A673 (cell line): ENCODE measurements at regions of chr20 and their contacts with region 1.

Region 1: GRCh38 chr20:1466211-1467081 is at the start of gene NSFL1C:
- DNase-seq: peak; percentile 96
- H3K4me3 ChIP-seq: peak within 1 kb of the TSS; percentile 98
- H3K27ac ChIP-seq: peak within 1 kb of the TSS; percentile 97
- H3K4me1 ChIP-seq: peaks cover 13% of the 10 kb centered on the region
- H3K27me3 ChIP-seq: no peaks in the 10 kb centered on the region
- CTCF ChIP-seq: peak; percentile 82
- total RNA-seq, gene NSFL1C: 148 and 158 TPM in 2 replicates

Region 2: GRCh38 chr20:1118336-1119127 is 347.9 kb before region 1 on chr20 and contains the start of gene PSMF1:
- CTCF ChIA-PET with region 1: no interaction called
- POLR2A ChIA-PET with region 1: no interaction called
- intact Hi-C with region 1: loop called (anchors 10 kb)
- DNase-seq: peak; percentile 96
- H3K4me3 ChIP-seq: peak within 1 kb of the TSS; percentile 99
- H3K27ac ChIP-seq: peak within 1 kb of the TSS; percentile 61
- H3K4me1 ChIP-seq: peaks cover 38% of the 10 kb centered on the region
- H3K27me3 ChIP-seq: no peaks in the 10 kb centered on the region
- CTCF ChIP-seq: no peak
- total RNA-seq, gene PSMF1: 130 and 155 TPM in 2 replicates

Region 3: DNA sequence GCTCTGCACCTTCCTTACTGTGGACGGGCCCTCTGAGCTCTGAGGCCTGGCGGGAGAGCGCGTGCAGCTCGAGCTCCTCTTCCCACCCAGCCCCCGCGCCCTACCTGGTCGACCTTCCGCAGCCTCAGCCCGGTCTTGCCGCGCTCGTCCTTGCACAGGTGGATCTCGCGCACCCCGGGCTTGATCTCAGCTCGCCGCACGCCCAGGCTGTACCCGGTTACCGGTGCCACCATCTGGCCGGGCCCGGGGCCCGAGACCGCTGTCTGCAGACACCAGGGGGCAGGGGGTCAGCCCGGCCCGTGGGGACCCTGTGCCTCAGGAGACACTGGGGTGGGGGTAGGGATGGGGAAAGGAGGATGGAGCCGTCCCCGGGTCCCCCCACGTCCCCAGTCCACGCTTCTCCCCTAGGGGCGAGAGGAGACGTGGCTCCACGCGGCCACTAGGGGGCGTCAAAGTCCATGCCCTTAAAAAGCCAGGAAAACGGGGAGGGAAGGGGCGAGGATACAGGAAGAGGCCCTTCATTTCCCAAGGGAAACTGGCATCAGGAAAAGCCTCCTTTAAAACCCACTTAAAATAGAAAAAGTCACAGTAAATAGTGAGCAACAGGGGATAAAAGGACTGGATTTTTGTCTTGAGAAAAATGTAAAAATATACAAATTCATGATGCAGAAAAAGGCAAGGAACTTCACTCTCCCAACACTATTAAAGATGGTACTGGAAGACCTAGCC is 153.0 kb before region 1 on chr20:
- CTCF ChIA-PET with region 1: no interaction called
- POLR2A ChIA-PET with region 1: no interaction called
- intact Hi-C with region 1: loop called (anchors 2 kb)
- DNase-seq: peak; percentile 87
- H3K4me3 ChIP-seq: no peak overlapping the region
- H3K27ac ChIP-seq: peak overlapping the region; percentile 1
- H3K4me1 ChIP-seq: peaks cover 5% of the 10 kb centered on the region
- H3K27me3 ChIP-seq: no peaks in the 10 kb centered on the region
- CTCF ChIP-seq: peak; percentile 96

Region 4: GRCh38 chr20:1450926-1451491 is 15.4 kb before region 1 on chr20:
- CTCF ChIA-PET with region 1: interaction called, 12 read pairs
- POLR2A ChIA-PET with region 1: no interaction called
- intact Hi-C with region 1: no loop called
- DNase-seq: no peak
- H3K4me3 ChIP-seq: no peak overlapping the region
- H3K27ac ChIP-seq: no peak overlapping the region
- H3K4me1 ChIP-seq: no peaks in the 10 kb centered on the region
- H3K27me3 ChIP-seq: no peaks in the 10 kb centered on the region
- CTCF ChIP-seq: no peak

Region 5: DNA sequence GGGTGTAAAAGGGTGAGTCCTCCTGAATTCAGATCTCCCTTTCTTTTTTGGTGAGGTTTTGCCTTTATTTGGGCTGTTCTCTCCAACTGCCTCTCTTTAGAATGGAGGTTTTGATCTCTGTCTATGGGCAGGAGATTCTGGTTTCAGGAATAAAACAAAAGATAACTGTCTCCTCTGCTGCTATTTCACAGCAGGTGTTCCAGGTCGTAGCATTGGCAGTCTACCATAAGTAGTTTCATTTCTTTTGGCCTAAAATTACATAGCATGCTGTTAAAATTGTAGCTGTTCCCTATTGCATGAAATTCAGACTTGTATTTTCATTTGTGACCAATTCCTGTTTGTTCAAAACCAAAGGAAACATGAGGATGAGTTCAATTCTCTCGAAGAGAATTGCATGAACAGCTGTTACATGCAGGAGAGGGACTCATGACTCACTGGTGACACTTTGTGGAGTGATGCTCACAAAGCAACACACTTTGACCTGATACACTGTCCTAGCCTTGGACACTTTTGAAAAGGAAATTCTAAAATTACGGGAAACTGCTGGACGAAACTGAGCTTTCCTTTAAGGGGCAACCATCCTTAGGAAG is 267.9 kb after region 1 on chr20:
- CTCF ChIA-PET with region 1: no interaction called
- POLR2A ChIA-PET with region 1: no interaction called
- intact Hi-C with region 1: no loop called
- DNase-seq: peak; percentile 32
- H3K4me3 ChIP-seq: no peak overlapping the region
- H3K27ac ChIP-seq: no peak overlapping the region
- H3K4me1 ChIP-seq: no peaks in the 10 kb centered on the region
- H3K27me3 ChIP-seq: peaks cover 3% of the 10 kb centered on the region
- CTCF ChIP-seq: peak; percentile 37; the same call in 1 of the 2 replicates